ENCODE measurements at regions of chr11 and their contacts with region 1.

Region 1: GRCh38 chr11:122863704-122864326 is 18.7 kb upstream of the JHY start:
- DNase-seq: no peak
- ATAC-seq: peak in 1 of 2 donors; percentile 38

Region 2: GRCh38 chr11:123020968-123021367 is 157.2 kb after region 1 on chr11:
- intact Hi-C with region 1: loop called (anchors 2 to 10 kb)
- DNase-seq: no peak
- ATAC-seq: peak in 1 of 2 donors; percentile 38

Region 3: GRCh38 chr11:123054301-123055065 is 190.7 kb after region 1 on chr11:
- intact Hi-C with region 1: loop called in 1 of 2 experiments (anchors 10 kb)
- DNase-seq: no peak
- ATAC-seq: peak; percentile 76 to 91

Region 4: DNA sequence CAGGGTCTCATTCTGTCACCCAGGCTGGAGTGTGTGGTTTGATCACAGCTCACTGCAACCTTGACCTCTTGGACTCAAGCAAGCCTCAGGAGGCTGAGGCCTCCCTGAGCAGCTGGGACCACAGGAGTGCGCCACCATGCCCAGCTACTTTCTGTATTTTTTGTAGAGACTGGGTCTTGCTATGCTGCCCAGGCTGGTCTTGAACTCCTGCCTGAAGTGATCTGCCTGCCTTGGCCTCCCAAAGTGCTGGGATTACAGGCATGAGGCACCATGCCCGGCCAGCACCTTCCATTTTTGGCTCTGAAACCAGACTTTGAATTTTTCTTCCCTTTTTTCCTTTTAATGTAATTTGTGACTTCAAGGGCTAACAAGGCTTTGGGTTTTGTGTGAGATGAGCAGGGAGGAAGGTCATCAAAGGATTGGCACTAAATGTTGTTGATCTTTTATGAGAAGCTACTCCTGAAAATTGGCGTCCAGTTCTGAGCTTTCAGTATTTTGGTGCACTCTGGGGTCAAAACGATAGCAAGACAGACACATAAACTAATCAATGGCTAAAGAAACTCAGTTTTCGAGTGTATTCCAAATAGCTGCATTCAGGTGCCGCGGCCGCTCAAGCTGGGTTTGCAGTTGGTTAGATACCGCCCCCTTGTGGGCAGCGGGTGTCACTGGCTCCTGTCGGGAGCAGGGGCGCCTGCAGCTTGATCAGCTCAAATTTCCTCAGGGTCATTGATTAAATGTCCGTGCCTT is 383.1 kb after region 1 on chr11:
- intact Hi-C with region 1: loop called in 1 of 2 experiments (anchors 10 kb)
- DNase-seq: peak; percentile 85
- ATAC-seq: peak; percentile 73 to 83

Measured in left cardiac atrium (tissue), 4 donors.